HEK293T (cell line): ENCODE measurements at regions of chr2 and their contacts with region 1.

Region 1: DNA sequence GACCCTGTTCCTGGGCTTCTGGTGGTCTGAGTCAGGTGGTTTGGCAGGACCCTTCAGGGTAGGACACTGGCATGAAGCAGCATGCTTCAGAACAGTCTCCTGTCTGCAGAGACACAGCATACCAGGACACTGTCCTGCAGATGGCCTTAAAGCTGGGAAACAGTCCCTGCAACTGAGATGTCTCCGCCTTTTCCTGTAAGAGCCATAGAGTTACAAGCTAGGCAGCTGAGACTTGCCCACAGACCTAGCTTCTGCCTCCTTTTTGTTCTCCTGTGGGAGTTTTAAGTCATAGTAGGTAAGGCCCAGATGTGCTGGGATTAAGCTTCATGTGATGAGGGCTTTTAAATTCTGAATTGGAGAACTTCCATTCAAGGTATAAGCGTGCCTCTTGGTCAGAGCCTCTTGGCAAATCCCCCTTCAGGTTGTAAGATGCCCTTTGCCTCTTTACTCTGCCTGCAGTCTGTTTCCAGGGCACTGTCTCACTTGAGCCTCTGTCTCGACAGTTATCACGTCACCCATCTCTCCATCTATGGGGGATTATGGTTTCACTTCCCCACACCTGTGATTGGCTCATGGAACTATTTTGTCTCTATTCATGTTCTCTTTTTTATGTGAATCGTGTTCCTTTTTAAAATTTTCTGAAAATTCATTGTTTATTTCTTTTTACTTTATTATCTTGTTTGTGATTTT is 51.8 kb downstream of the COA5 start:
- DNase-seq: no peak

Region 2: DNA sequence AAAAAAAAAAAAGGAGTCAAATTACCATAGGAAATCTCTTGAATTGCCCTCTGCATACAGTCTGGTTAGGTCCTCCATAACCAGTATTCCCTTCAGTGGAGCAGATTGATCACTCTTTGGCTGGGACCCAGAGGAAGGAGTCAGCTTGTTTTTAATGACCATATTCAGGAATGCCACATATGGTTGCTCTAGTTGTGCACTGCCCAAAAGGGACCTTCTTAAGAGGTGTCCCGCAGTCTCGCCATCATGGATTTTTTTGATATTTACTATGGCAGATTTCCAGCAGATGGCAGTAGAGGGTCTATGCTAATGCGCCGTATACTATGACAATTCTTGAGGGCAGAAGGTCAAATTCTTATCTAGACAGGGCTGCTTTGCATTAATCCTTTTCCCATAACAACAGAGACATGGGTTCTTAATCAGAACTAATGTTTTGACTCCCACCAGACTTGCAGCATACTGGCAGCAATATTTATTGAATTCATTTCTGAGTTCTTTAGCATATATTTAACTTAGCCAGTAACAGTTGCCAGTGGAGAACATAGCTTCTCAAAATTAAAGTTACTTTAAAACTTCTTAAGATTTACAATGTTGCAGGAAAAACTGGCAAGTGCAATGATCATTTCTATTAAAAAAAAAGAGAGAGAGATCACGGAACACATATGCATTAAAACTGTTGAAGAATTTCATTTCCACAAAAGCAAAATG is 143.6 kb before region 1 on chr2:
- CTCF ChIA-PET with region 1: no interaction called
- POLR2A ChIA-PET with region 1: no interaction called
- DNase-seq: peak; percentile 66

Region 3: GRCh38 chr2:98518090-98518489 is 38.4 kb before region 1 on chr2:
- CTCF ChIA-PET with region 1: no interaction called
- POLR2A ChIA-PET with region 1: no interaction called
- DNase-seq: no peak

Region 4: DNA sequence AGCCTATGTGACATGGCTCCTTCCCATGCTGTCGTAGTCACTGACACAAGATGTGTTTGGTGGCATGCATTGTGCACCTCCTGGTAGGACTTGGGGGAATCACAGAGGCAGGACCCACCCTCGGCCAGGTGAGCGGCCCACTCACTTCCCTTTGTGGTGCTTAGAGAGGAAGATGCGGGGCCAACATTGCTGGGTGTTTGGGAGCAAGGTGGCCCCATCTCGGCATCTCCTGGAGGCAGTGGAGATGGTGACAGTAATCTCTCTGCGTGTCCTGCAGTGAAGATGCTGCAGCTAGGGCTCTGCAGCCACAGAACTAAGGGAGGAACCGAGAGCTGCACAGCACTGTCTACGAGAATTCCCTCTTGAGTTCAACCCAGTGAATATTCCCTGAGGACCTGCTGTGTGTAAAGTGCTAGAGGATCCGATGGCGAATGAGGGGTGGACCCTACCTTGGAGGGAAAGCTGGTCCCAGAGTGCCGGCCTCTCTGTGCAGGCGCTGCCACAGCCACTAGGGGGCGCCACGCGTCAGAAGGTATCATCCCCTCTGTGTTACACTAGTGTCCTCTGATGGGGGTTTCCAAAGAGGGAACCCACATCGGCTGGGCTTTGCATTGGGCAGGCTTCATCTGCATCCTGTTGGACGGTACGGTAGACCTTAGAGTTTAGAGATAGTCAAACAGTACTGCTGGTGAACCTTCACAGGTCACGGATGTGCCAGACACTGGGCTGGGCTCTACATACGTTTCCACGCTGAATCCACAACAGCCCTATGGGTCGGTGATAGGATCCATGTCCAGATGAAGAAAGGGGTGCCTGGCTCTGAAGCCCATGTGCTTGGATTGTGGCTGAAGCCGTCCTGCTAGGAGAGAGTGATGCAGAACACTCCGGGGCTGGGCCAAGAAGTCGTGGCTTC is 12.6 kb after region 1 on chr2:
- CTCF ChIA-PET with region 1: interaction called, 10 read pairs
- POLR2A ChIA-PET with region 1: no interaction called
- DNase-seq: peak; percentile 78